Mammary epithelial cell (primary cell): ENCODE measurements at regions of chr19 and their contacts with region 1.

Region 1: DNA sequence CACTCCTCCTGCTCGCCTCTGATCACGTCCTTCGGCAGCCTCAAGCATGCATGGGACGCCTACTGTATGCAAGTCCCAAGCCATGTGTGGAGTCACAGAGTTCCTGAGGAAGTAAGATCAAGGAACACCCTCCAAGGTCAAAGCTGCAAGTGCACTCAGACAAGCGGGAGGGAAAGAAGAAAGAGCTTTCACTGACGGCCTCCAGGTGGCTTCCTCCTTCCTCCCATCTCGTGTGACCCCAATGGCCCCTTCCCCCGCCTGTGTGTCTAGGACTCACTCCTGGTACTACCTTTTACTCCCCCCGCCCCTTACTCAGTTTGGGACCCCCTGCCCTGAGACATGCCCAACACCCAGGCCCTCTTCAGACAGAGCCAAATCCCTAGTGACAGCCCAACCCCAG is 6.0 kb downstream of the HAUS8 start:
- DNase-seq: no peak
- H3K4me3 ChIP-seq: no peak overlapping the region
- H3K27ac ChIP-seq: no peak overlapping the region
- H3K4me1 ChIP-seq: peaks cover 10% of the 10 kb centered on the region
- H3K27me3 ChIP-seq: no peaks in the 10 kb centered on the region
- CTCF ChIP-seq: no peak

Region 2: DNA sequence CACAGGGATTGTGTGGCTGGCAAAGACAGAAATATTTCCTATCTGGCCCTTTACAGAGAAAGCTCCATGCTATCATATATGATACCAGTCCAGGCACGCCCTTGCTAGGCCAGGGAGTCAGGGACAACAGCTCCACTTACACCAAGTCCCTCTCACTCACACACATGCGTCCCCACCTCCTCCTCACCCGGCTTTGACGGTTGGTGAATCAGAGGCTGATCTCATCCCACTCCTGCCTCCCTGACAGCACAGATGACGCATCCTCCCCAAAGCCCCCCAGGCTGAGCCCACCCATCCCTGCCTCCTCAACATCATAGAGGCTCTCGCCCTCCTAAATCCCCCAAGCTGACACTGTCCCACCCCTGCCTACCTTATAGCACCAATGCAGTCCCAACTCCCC is 117.7 kb before region 1 on chr19:
- CTCF ChIA-PET with region 1: no interaction called
- dilution Hi-C with region 1: no loop called
- in situ Hi-C with region 1: no loop called
- intact Hi-C with region 1: no loop called
- DNase-seq: peak; percentile 83
- H3K4me3 ChIP-seq: no peak overlapping the region
- H3K27ac ChIP-seq: no peak overlapping the region
- H3K4me1 ChIP-seq: peaks cover 12% of the 10 kb centered on the region
- H3K27me3 ChIP-seq: no peaks in the 10 kb centered on the region
- CTCF ChIP-seq: no peak

Region 3: GRCh38 chr19:17021793-17022583 is 47.2 kb before region 1 on chr19:
- CTCF ChIA-PET with region 1: no interaction called
- dilution Hi-C with region 1: no loop called
- in situ Hi-C with region 1: no loop called
- intact Hi-C with region 1: no loop called
- DNase-seq: peak; percentile 92
- H3K4me3 ChIP-seq: no peak overlapping the region
- H3K27ac ChIP-seq: peak overlapping the region; percentile 1
- H3K4me1 ChIP-seq: peaks cover 24% of the 10 kb centered on the region
- H3K27me3 ChIP-seq: no peaks in the 10 kb centered on the region
- CTCF ChIP-seq: no peak

Region 4: DNA sequence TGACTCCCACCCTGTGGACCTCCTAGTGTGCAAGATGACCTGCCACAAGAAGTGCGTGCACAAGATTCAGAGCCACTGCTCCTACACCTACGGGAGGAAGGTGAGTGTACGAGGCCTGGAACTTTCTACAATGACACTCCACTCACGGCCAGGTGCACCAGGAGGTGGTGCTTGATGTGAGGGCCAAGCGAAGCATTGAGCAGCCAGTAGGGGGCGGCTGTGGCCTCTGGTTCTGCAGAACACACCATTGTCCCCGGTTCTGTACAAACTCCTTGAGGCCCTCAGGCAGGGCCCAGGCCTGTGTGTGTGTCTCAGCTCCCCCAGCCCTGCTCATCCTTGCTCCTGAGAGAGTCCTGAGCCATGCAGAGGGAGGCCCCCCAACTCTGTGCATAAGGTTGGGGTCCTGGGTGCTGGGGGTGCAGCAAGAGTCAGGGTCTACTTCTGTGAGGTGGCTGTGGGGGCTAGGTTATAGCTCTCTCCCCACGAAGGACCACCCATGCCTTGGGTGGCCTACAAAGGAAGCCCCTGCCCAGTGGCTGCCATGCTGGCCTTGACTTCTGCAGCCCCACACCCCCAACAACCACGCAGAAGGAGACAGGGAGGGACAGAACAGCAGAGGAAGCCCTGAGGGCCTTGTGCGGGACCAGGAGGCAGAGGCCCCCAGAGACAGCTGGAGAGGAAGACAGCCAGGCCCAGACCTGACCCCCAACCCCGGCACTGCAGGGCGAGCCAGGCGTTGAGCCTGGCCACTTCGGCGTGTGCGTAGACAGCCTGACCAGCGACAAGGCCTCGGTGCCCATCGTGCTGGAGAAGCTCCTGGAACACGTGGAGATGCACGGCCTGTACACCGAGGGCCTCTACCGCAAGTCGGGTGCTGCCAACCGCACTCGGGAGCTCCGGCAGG is 136.3 kb after region 1 on chr19:
- CTCF ChIA-PET with region 1: no interaction called
- dilution Hi-C with region 1: no loop called
- in situ Hi-C with region 1: no loop called
- intact Hi-C with region 1: loop called (anchors 1 kb)
- DNase-seq: peak; percentile 23
- H3K4me3 ChIP-seq: no peak overlapping the region
- H3K27ac ChIP-seq: no peak overlapping the region
- H3K4me1 ChIP-seq: peaks cover 4% of the 10 kb centered on the region
- H3K27me3 ChIP-seq: no peaks in the 10 kb centered on the region
- CTCF ChIP-seq: peak; percentile 60 to 73

Region 5: GRCh38 chr19:17235618-17236377 is 166.6 kb after region 1 on chr19:
- CTCF ChIA-PET with region 1: no interaction called
- dilution Hi-C with region 1: no loop called
- in situ Hi-C with region 1: no loop called
- intact Hi-C with region 1: loop called (anchors 1 kb)
- DNase-seq: peak; percentile 61
- H3K4me3 ChIP-seq: peak overlapping the region; percentile 39 to 67 (median 58)
- H3K27ac ChIP-seq: no peak overlapping the region
- H3K4me1 ChIP-seq: peaks cover 16% of the 10 kb centered on the region
- H3K27me3 ChIP-seq: no peaks in the 10 kb centered on the region
- CTCF ChIP-seq: peak; percentile 7 to 54

Region 6: DNA sequence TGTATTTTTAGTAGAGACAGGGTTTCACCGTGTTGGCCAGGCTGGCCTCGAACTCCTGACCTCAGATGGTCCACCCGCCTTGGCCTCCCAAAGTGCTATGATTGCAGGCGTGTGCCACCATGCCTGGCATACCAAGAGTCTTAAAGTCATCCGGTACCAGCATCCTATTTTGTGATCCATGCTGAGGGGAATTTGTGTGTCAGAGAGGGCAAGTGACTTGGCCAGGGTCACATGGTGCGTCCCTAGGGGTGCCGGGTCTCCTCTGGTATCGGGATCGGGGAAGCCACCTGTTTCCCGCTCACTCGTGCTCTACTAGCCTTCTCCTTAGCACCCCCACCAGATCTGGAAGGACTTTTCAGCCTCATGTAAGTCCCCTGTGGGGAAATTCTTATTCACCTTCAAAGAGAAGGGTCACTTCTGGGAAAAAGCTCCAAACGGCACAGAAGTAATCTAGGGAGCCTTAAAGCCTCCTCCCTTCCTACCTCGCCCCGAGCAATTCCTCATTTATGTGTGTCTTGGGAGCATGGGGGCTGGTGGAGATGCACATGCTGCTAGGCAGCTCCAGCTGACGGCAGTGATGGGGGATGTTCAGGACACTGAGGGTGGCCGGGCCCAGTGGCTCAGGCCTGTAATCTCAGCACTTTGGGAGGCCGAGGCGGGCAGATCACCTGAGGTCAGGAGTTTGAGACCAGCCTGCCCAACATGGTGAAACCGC is 206.4 kb after region 1 on chr19:
- CTCF ChIA-PET with region 1: no interaction called
- dilution Hi-C with region 1: no loop called
- in situ Hi-C with region 1: loop called (anchors 5 kb)
- intact Hi-C with region 1: no loop called
- DNase-seq: no peak
- H3K4me3 ChIP-seq: no peak overlapping the region
- H3K27ac ChIP-seq: no peak overlapping the region
- H3K4me1 ChIP-seq: no peaks in the 10 kb centered on the region
- H3K27me3 ChIP-seq: no peaks in the 10 kb centered on the region
- CTCF ChIP-seq: no peak

Region 7: DNA sequence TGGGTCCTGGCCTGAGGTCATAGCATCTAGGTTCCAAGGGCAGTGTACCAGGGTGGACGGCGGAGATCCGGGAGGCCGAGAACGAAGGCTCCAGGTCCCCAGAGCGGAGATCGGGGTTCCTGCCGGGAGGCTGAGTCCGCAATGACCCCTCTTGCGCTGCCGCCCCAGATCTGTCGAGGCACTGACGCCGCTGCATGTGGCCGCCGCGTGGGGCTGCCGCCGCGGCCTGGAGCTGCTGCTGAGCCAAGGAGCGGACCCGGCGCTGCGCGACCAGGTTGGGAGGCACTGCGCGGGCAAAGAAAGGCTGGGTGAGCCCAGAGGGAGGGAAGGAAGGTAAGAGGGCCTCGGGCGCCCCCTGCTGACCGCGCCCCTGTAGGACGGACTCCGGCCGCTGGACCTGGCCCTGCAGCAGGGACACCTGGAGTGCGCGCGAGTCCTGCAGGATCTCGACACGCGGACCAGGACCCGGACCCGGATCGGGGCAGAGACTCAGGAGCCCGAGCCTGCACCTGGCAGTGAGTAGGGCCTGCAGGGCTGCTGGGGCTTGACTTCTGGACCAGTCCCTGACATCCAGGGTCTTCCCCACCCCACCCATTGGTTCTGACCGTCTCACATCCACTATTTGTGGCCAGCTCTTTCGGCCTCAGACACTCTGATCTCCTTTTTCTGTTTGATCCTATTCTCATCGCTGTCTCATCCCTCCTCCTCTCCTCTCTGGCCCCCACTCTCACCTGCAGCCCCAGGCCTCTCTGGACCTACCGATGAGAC is 213.5 kb after region 1 on chr19:
- CTCF ChIA-PET with region 1: no interaction called
- dilution Hi-C with region 1: no loop called
- in situ Hi-C with region 1: loop called (anchors 5 kb)
- intact Hi-C with region 1: loop called (anchors 1 kb)
- DNase-seq: peak; percentile 72
- H3K4me3 ChIP-seq: peak overlapping the region in 2 of 3 experiments; percentile 10 to 41
- H3K27ac ChIP-seq: no peak overlapping the region
- H3K4me1 ChIP-seq: peaks cover 12% of the 10 kb centered on the region
- H3K27me3 ChIP-seq: no peaks in the 10 kb centered on the region
- CTCF ChIP-seq: peak; percentile 68 to 90